CD8-positive, alpha-beta T cell (primary cell): ENCODE measurements at regions of chr1 and their contacts with region 1.

Region 1: DNA sequence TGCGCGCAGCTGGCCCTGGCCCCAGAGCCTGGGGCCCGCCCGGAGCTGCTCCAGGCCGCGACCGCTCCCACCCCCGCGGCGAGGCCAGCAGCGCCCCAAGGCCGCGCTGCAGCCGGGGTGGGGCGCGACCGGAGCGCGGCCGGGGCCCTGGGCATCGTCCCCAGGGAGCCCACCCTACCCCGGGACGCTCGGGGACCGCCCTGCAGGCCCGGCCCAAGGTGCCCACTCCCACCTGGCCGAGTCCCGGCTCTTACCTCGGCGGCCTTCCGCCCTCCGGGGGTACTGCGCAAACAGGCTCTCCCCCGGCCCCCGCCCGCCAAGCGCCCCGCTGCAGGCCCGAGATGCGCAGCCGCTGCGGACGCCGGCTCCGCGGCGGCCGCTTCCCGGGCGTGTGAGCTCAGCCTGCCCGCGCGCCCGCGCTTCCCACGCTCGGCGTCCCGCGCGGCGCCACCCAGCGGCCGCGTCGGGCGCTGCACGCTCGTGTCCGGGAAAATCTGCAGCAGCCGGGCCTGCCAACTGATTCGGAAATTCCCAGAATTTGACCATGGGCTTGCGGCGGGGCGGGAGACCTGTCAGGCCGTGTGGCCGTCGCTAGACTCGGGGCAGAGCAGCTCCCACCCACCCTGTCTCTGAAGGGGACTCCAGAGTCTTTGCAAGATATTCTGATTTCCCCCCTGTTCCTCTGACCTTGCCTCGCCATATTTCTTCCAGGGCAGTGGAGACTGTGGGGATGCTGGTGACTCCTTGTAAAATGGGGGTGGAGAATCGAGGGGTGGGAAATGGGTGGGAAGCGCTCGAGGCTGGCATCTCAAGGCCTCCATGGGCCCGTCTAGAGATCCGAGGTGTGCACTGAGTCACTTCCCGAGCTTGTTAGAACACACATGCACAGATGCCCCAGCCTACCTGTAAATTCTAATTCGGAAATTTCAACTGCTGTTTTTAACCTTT is 41.9 kb downstream of the CD34 start:
- DNase-seq: peak; percentile 56 to 90 (median 68)
- ATAC-seq: peak; percentile 68
- H3K4me3 ChIP-seq: peak overlapping the region; percentile 66 to 87
- H3K4me3 Mint-ChIP-seq: peak overlapping the region; percentile 94
- H3K27ac ChIP-seq: peak overlapping the region; percentile 72 to 84
- H3K27ac Mint-ChIP-seq: peak overlapping the region; percentile 96
- H3K4me1 ChIP-seq: peaks cover 80% of the 10 kb centered on the region
- H3K4me1 Mint-ChIP-seq: peaks cover 90% of the 10 kb centered on the region
- H3K27me3 ChIP-seq: no peaks in the 10 kb centered on the region
- H3K27me3 Mint-ChIP-seq: no peaks in the 10 kb centered on the region
- CTCF ChIP-seq: peak; percentile 83

Region 2: GRCh38 chr1:207751790-207752455 is 117.1 kb before region 1 on chr1 and contains the start of gene CD46:
- CTCF ChIA-PET with region 1: interaction called, 3 read pairs
- POLR2A ChIA-PET with region 1: no interaction called
- intact Hi-C with region 1: loop called (anchors 2 to 5 kb)
- DNase-seq: peak; percentile 85 to 97 (median 94)
- ATAC-seq: peak; percentile 95
- H3K4me3 ChIP-seq: peak within 1 kb of the TSS; percentile 76 to 91
- H3K4me3 Mint-ChIP-seq: peak within 1 kb of the TSS; percentile 100
- H3K27ac ChIP-seq: peak within 1 kb of the TSS; percentile 58 to 90
- H3K27ac Mint-ChIP-seq: peak within 1 kb of the TSS; percentile 97
- H3K4me1 ChIP-seq: peaks cover 51% of the 10 kb centered on the region
- H3K4me1 Mint-ChIP-seq: peaks cover 81% of the 10 kb centered on the region
- H3K27me3 ChIP-seq: no peaks in the 10 kb centered on the region
- H3K27me3 Mint-ChIP-seq: no peaks in the 10 kb centered on the region
- CTCF ChIP-seq: no peak
- total RNA-seq, gene CD46: 108 to 109 TPM

Region 3: GRCh38 chr1:207811920-207812720 is 56.9 kb before region 1 on chr1:
- CTCF ChIA-PET with region 1: interaction called, 12 read pairs
- POLR2A ChIA-PET with region 1: interaction called, 3 read pairs
- intact Hi-C with region 1: no loop called
- DNase-seq: peak in 2 of 9 experiments; percentile 9 to 46
- ATAC-seq: no peak
- H3K4me3 ChIP-seq: no peak overlapping the region
- H3K4me3 Mint-ChIP-seq: no peak overlapping the region
- H3K27ac ChIP-seq: no peak overlapping the region
- H3K27ac Mint-ChIP-seq: peak overlapping the region; percentile 69
- H3K4me1 ChIP-seq: peaks cover 41% of the 10 kb centered on the region
- H3K4me1 Mint-ChIP-seq: peaks cover 76% of the 10 kb centered on the region
- H3K27me3 ChIP-seq: no peaks in the 10 kb centered on the region
- H3K27me3 Mint-ChIP-seq: no peaks in the 10 kb centered on the region
- CTCF ChIP-seq: no peak

Region 4: DNA sequence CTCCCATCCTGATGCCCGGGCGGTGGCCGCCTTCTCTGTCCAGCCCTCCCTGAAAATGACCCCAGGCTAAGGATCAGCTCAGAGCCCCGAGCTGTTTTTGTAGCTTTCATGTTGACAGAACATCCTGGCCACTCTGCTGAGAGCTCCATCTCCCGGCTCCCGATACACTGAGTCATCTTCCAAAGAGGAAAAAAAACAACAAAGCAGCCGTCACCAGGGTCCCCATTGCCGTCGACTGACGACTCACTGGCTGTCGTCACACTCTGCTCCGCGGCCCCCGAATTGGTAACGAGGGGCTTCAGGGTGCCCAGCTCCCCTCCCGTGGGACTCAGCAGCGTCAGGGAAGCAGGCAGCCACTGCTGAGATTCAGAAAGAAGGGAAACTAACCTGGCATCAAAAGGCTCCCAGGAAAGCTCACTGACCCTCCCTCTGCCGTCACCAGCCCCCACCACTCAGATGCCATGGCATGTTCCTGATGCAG is 50.0 kb before region 1 on chr1:
- CTCF ChIA-PET with region 1: interaction called, 321 read pairs
- POLR2A ChIA-PET with region 1: interaction called, 62 read pairs
- intact Hi-C with region 1: no loop called
- DNase-seq: no peak
- ATAC-seq: no peak
- H3K4me3 ChIP-seq: no peak overlapping the region
- H3K4me3 Mint-ChIP-seq: no peak overlapping the region
- H3K27ac ChIP-seq: no peak overlapping the region
- H3K27ac Mint-ChIP-seq: no peak overlapping the region
- H3K4me1 ChIP-seq: peaks cover 50% of the 10 kb centered on the region
- H3K4me1 Mint-ChIP-seq: peaks cover 75% of the 10 kb centered on the region
- H3K27me3 ChIP-seq: no peaks in the 10 kb centered on the region
- H3K27me3 Mint-ChIP-seq: no peaks in the 10 kb centered on the region
- CTCF ChIP-seq: no peak

Region 5: DNA sequence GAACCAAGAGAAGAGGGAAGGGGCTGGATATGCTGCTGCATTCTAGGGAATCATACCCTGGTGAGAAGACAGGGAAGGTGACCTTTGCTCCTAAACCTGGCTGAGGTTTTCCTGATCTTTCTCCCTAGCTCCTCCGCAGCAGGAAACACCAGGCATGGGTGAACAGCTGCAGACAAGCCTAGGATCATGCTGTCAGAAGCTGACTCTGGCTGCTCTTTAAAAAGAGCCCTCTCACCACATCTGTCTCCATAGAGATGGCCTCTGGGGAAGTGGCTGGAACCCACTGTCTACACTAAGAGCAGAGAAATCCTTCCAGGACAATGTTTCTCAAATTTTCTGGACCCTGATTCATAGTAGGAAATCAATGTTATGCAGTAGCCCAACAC is 15.7 kb before region 1 on chr1:
- CTCF ChIA-PET with region 1: interaction called, 13 read pairs
- POLR2A ChIA-PET with region 1: interaction called, 5 read pairs
- intact Hi-C with region 1: loop called in 1 of 2 experiments (anchors 2 kb)
- DNase-seq: no peak
- ATAC-seq: no peak
- H3K4me3 ChIP-seq: no peak overlapping the region
- H3K4me3 Mint-ChIP-seq: peak overlapping the region; percentile 29
- H3K27ac ChIP-seq: no peak overlapping the region
- H3K27ac Mint-ChIP-seq: no peak overlapping the region
- H3K4me1 ChIP-seq: peaks cover 64% of the 10 kb centered on the region
- H3K4me1 Mint-ChIP-seq: peaks cover 87% of the 10 kb centered on the region
- H3K27me3 ChIP-seq: no peaks in the 10 kb centered on the region
- H3K27me3 Mint-ChIP-seq: no peaks in the 10 kb centered on the region
- CTCF ChIP-seq: no peak

Region 6: GRCh38 chr1:207885129-207886032 is 16.3 kb after region 1 on chr1:
- CTCF ChIA-PET with region 1: interaction called, 189 read pairs
- POLR2A ChIA-PET with region 1: interaction called, 43 read pairs
- intact Hi-C with region 1: loop called in 1 of 2 experiments (anchors 1 kb)
- DNase-seq: peak; percentile 43 to 87 (median 68)
- ATAC-seq: peak; percentile 74
- H3K4me3 ChIP-seq: no peak overlapping the region
- H3K4me3 Mint-ChIP-seq: peak overlapping the region; percentile 20
- H3K27ac ChIP-seq: no peak overlapping the region
- H3K27ac Mint-ChIP-seq: peak overlapping the region; percentile 96
- H3K4me1 ChIP-seq: peaks cover 26% of the 10 kb centered on the region
- H3K4me1 Mint-ChIP-seq: peaks cover 37% of the 10 kb centered on the region
- H3K27me3 ChIP-seq: no peaks in the 10 kb centered on the region
- H3K27me3 Mint-ChIP-seq: peaks cover 3% of the 10 kb centered on the region
- CTCF ChIP-seq: peak; percentile 86

Region 7: GRCh38 chr1:208437416-208437815 is 568.4 kb after region 1 on chr1:
- CTCF ChIA-PET with region 1: no interaction called
- POLR2A ChIA-PET with region 1: no interaction called
- intact Hi-C with region 1: no loop called
- DNase-seq: no peak
- ATAC-seq: no peak
- H3K4me3 ChIP-seq: no peak overlapping the region
- H3K4me3 Mint-ChIP-seq: no peak overlapping the region
- H3K27ac ChIP-seq: no peak overlapping the region
- H3K27ac Mint-ChIP-seq: no peak overlapping the region
- H3K4me1 ChIP-seq: no peaks in the 10 kb centered on the region
- H3K4me1 Mint-ChIP-seq: no peaks in the 10 kb centered on the region
- H3K27me3 ChIP-seq: no peaks in the 10 kb centered on the region
- H3K27me3 Mint-ChIP-seq: peaks cover 3% of the 10 kb centered on the region
- CTCF ChIP-seq: no peak